Lower lobe of right lung (tissue), 2 donors: ENCODE measurements at regions of chr12 and their contacts with region 1.

Region 1: GRCh38 chr12:21989819-21990412 is 48.7 kb upstream of the ABCC9 start:
- DNase-seq: no peak
- ATAC-seq: peak in 1 of 2 donors; percentile 47
- H3K4me3 ChIP-seq: no peak overlapping the region
- H3K27ac ChIP-seq: no peak overlapping the region
- H3K4me1 ChIP-seq: no peaks in the 10 kb centered on the region
- H3K27me3 ChIP-seq: no peaks in the 10 kb centered on the region
- CTCF ChIP-seq: peak; percentile 43

Region 2: GRCh38 chr12:21697904-21698630 is 291.8 kb before region 1 on chr12:
- intact Hi-C with region 1: loop called (anchors 10 kb)
- DNase-seq: no peak
- ATAC-seq: peak in 1 of 2 donors; percentile 45
- H3K4me3 ChIP-seq: no peak overlapping the region
- H3K27ac ChIP-seq: no peak overlapping the region
- H3K4me1 ChIP-seq: peaks cover 6% of the 10 kb centered on the region
- H3K27me3 ChIP-seq: no peaks in the 10 kb centered on the region
- CTCF ChIP-seq: peak; percentile 63